Ovary (tissue), 10 donors: ENCODE measurements at regions of chrX and their contacts with region 1.

Region 1: GRCh38 chrX:15451938-15452337 is 41.2 kb downstream of the PIR start:
- DNase-seq: peak in 4 of 5 donors; percentile 23 to 54 (median 42)
- H3K4me3 ChIP-seq: no peak overlapping the region
- H3K27ac ChIP-seq: no peak overlapping the region
- H3K4me1 ChIP-seq: no peaks in the 10 kb centered on the region
- H3K27me3 ChIP-seq: no peaks in the 10 kb centered on the region
- CTCF ChIP-seq: no peak
- EP300 ChIP-seq: no peak
- POLR2A ChIP-seq: no peak

Region 2: DNA sequence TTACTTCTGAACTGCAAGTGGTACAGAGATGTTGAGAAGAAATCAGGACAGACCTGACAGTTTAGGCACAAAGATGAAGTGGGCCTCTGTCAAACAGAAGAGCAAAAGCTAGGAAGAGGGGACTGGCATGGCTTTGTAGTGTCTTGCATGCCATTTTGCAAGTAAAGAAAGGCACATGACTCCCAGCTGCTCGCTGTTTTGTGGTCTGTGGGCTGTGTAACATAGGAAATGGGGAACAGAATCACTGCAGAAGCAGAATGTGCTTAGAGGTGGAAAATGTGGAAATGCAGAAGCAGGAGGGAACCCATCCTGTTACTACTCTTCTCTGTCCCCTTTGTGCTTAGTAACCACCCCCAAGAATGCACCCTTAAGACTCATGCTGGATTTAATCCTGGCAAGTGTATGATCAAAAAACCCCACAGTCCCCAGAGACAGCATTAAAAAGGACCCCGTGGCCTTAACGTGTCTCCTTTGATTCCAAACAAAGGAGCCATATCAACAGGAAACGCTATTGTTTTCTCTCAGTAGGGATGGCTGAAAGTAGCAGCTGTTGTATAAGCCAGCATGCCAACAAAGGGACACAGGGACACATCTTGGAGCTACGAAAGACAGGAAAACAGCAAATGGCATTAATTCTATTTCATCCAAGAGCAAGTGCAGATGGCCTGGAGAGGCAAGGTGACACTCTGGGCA is 1100.2 kb before region 1 on chrX:
- intact Hi-C with region 1: loop called in 1 of 4 experiments (anchors 5 kb)
- DNase-seq: no peak
- H3K4me3 ChIP-seq: no peak overlapping the region
- H3K27ac ChIP-seq: no peak overlapping the region
- H3K4me1 ChIP-seq: no peaks in the 10 kb centered on the region
- H3K27me3 ChIP-seq: no peaks in the 10 kb centered on the region
- CTCF ChIP-seq: no peak
- EP300 ChIP-seq: no peak
- POLR2A ChIP-seq: no peak